Activated T-helper 1 cell treated with anti-CD3 and anti-CD28 coated beads, Interleukin-12 subunit alpha, Interleukin-12 subunit beta, Interleukin-2, Interleukin-4 antibody, amounts not matched to agents 30 ng/mL and 10 ng/mL and 1 ng/mL, durations not matched to agents 14 hours and 24 hours and 36 hours (primary cell): ENCODE measurements at regions of chr17 and their contacts with region 1.

Region 1: DNA sequence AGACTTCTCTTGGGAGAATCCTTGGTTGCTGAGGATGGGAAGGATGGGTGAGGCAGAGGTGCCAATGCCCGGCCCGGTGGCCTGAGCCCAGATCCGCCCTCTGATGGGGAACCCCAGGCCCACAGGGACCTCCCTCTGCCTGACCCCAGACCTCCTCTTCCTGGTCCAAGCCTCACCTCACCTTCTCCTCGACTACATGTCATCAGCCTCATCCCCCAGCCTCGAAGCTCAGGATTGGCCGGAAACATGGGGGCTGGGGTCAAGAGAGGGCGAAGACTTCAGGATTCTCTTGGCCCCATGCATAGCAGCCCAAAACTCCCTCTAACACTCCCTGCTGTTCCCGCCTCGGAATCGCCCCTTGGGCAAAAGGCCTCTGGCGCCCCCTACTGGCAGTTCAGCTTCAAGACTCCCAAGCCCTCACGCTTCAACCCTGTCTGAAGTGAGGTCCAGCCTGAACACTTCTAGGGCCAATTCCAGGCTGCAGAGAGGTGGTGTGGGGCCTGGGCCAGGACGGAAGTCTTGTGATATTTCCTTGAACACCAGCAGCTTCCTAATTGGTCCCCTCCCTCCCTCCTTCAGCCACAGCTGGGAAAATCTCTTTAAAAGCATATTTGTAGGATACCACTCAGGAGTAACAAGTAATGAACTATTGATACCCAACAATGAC is 47.2 kb downstream of the ARHGAP27 start:
- DNase-seq: peak; percentile 81
- H3K4me3 Mint-ChIP-seq: no peak overlapping the region
- H3K27ac Mint-ChIP-seq: peak overlapping the region; percentile 77
- H3K4me1 Mint-ChIP-seq: peaks cover 24% of the 10 kb centered on the region
- H3K27me3 Mint-ChIP-seq: peaks cover 12% of the 10 kb centered on the region

Region 2: DNA sequence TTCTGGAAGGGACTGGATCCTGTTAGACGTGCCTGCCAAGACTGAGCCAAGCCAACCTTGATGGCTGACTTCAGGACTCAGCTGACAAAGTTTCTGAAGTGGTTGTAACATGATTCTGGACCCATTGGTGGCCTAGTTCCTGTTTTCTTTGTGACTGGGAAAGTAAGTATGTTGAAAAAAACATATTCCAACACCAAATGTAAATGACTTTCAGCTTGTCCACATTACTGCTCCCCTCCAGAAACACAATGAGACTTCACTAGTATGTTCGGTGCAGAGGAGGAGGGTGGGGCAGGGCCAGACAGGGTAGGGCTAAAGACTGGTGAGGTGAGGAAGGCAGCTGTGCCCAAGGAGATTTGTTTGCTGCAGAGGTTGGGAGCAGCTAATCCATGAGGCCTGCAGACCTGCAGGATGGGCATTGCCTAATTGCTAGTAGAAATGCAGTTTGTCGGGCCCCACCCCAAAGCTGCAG is 297.9 kb before region 1 on chr17:
- intact Hi-C with region 1: no loop called
- DNase-seq: no peak
- H3K4me3 Mint-ChIP-seq: no peak overlapping the region
- H3K27ac Mint-ChIP-seq: no peak overlapping the region
- H3K4me1 Mint-ChIP-seq: no peaks in the 10 kb centered on the region
- H3K27me3 Mint-ChIP-seq: no peaks in the 10 kb centered on the region

Region 3: DNA sequence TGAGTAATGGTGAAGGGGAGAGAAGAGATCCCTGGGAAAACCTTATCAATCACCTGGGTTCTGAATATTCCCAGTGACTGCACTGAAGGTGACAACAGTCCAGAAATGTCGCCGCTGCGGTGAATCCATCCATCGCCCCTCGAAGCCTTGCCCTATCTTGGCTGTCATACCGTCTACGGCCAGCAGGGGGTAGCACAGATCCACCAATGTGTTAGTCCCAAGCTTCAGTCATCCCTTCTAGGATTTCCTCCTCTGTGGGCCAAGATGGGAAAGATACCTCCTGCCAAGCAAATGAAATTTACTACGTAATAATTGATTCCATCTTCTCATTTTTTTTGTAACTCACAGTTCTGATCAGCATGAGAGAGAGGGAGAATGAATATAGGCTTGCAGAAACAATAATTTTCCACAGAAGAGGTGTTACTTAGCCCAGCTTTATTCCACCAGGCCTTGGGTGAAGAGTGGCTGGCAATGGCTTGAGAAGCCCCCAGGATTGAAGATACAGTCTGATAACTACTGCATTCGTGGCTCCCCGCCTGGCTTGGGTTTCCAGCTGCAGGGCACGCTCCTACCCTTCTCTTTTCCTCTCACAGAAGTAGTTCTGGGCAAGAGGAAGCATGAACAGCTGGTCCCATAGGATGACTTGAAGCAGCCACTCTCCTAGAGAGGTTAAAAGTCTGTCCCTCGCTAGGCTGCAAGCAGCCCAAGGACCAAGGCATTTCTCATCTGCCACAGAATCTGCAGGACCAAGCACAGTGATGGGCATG is 166.4 kb before region 1 on chr17:
- intact Hi-C with region 1: loop called (anchors 1 kb)
- DNase-seq: peak; percentile 73
- H3K4me3 Mint-ChIP-seq: peak overlapping the region; percentile 93
- H3K27ac Mint-ChIP-seq: peak overlapping the region; percentile 80
- H3K4me1 Mint-ChIP-seq: peaks cover 42% of the 10 kb centered on the region
- H3K27me3 Mint-ChIP-seq: no peaks in the 10 kb centered on the region

Region 4: DNA sequence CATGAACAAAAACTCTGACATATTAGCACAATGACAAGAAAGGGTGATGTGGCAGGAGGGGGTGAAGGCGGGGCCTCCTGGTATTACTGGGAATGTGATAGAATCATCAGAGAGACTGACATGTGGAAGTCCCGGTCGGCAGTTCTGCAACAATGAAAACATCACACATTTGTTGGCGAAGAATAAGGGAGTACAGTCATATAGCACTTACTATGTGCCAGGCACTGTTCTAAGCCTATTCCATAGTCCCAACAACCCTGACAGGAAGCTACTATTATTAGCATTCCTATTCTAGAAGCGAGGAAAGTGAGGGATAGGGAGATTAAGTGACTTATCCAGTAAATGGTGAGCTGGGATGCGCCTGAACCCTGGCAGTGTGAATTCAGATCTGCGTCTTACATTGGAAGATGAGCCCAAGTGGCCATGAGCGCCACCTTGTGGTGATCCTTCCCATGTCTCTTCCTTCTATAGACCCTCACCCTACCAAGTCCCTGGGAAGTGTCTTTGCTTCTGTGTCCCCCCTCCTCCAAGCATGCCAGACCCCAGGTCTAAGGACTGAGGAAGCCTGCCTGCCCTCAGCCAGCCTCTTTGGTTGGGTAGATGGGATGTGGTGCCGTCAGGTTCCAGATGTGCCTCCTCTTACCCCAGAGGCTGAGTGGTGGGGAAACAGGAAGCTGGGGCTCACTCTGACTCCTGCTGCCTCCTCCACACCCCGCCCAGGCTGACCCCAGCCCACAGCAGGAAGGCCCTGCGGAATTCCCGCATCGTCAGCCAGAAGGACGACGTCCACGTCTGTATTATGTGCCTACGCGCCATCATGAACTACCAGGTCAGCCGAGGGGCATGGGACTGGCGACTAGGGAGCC is 149.8 kb before region 1 on chr17:
- intact Hi-C with region 1: loop called (anchors 1 kb)
- DNase-seq: no peak
- H3K4me3 Mint-ChIP-seq: peak overlapping the region; percentile 28
- H3K27ac Mint-ChIP-seq: peak overlapping the region; percentile 38
- H3K4me1 Mint-ChIP-seq: peaks cover 77% of the 10 kb centered on the region
- H3K27me3 Mint-ChIP-seq: no peaks in the 10 kb centered on the region

Region 5: DNA sequence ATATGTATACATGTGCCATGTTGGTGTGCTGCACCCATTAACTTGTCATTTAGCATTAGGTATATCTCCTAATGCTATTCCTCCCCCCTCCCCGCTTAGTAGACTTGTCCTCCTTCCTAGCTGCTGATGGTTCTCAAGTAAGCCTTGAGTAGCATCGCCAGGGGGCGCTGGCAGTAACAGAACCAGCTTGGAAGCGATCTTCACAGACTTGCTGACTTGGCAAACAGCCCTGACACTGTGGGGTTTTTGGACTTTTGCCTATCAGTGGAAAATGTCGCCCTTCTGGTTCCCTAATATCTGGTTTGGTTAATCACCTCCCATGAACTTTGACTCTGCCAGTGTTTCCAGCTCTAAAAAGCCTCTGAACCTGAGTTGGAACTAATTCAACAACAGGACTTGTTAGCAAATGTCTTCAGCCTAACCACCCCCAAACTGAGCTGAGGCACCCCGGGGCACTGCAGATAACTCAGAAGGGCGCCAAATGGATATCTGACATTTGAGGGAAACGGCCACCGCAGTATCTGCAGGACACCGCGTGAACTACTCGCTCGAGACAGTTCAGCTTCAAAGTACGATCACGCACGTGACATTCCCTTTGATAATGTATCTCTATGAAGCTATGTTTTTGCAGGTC is 108.1 kb before region 1 on chr17:
- intact Hi-C with region 1: loop called (anchors 1 kb)
- DNase-seq: peak; percentile 79
- H3K4me3 Mint-ChIP-seq: no peak overlapping the region
- H3K27ac Mint-ChIP-seq: peak overlapping the region; percentile 20
- H3K4me1 Mint-ChIP-seq: peaks cover 12% of the 10 kb centered on the region
- H3K27me3 Mint-ChIP-seq: no peaks in the 10 kb centered on the region

Region 6: DNA sequence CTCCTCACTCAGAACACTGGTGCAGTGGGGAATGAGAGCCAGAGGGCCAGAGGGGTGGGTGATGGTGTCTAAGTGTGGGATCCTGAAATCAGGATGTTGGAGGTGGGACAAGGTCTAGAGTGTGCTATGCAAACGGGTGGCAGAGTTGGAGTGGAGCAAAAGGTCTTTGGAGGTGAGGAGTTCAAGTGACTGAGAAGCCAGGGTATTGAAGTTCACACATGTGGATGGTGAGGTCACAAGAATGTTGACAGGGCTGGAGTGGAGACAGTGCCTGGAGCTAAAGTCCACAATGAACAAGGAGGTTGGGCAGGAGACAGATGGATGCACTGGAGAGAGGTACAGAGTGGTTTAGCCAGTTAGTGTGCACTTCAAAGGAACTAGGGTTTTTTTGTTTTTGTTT is 30.4 kb before region 1 on chr17:
- intact Hi-C with region 1: no loop called
- DNase-seq: no peak
- H3K4me3 Mint-ChIP-seq: no peak overlapping the region
- H3K27ac Mint-ChIP-seq: no peak overlapping the region
- H3K4me1 Mint-ChIP-seq: peaks cover 34% of the 10 kb centered on the region
- H3K27me3 Mint-ChIP-seq: peaks cover 11% of the 10 kb centered on the region